ENCODE measurements at regions of chr17 and their contacts with region 1.

Region 1: DNA sequence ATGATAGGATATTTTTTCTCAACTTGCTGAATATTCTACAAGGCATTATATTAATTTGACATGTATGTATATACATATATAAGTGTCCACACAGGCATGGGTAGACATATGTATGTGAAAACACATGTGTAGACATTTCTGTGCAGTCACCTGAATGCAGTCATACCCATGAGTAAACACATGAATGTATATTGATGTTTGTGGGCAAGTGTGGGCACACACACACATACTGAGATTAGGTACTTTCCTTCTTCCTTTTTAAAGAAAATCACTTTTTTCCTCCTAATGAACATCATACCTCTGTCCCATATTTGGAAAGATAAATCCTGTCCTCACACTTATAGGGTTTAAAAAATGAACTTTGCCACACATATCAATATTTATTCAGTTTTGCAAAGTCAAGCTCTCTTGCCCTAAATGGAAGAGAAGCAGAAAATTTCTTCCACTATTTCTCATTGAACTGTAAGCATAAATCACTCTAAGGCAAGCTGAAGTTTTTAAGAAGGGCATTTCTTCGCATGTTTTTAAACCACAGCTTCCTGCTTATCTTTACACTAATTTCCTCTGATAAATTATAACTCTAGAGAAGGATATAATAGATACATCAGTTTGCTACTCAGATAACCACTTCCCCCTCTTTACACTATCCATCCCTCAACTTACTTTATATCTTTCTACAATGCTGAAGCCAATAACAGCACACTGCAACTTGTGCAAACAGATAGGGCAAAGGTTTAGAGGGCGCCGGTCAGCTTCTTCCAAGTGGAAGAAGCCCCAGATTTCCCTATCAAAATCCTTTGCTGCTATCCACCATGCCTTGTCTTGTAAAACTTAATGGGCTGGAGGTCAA is 49.6 kb upstream of the LRRC37A3 start:
- DNase-seq: peak; percentile 49
- ATAC-seq: peak; percentile 46
- H3K4me3 Mint-ChIP-seq: no peak overlapping the region
- H3K27ac Mint-ChIP-seq: peak overlapping the region; percentile 88
- H3K4me1 Mint-ChIP-seq: peaks cover 70% of the 10 kb centered on the region
- H3K27me3 Mint-ChIP-seq: no peaks in the 10 kb centered on the region
- CTCF ChIP-seq: no peak

Region 2: DNA sequence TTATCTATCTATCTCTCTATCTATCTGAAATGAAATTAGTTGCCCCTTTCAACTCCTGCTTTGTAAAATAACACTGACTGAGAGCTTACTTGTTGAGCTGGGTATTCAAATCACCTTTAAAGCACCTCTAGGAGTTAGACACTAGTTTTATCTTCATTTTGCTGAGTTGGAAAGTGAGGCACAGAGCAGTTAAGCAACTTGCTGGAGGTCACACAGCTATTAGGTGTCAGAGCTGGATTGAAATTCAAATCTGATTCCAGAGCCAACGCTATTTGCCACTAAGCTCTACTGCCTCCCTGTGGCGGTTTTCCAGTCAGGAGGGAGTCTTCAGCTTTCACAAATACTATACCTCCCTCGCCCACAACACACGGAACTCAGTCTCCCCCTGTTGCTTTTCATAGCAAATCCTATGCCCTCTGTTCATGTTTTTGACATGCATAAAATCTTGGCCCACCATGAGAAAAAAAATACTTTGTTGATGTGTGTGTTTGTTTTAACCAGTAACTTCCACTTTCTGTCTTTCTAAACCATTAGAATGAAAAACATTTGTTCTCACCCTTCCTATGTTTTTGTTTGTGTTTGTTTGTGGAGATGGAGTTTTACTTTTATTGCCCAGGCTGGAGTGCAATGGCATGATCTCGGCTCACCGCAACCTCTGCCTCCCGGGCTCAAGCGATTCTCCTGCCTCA is 231.9 kb before region 1 on chr17:
- CTCF ChIA-PET with region 1: no interaction called
- POLR2A ChIA-PET with region 1: no interaction called
- intact Hi-C with region 1: no loop called
- DNase-seq: peak; percentile 78
- ATAC-seq: peak; percentile 83
- H3K4me3 Mint-ChIP-seq: no peak overlapping the region
- H3K27ac Mint-ChIP-seq: no peak overlapping the region
- H3K4me1 Mint-ChIP-seq: peaks cover 23% of the 10 kb centered on the region
- H3K27me3 Mint-ChIP-seq: no peaks in the 10 kb centered on the region
- CTCF ChIP-seq: peak; percentile 80

Region 3: GRCh38 chr17:65198653-65199382 is 229.9 kb after region 1 on chr17:
- CTCF ChIA-PET with region 1: no interaction called
- POLR2A ChIA-PET with region 1: no interaction called
- intact Hi-C with region 1: loop called (anchors 10 kb)
- DNase-seq: no peak
- ATAC-seq: no peak
- H3K4me3 Mint-ChIP-seq: no peak overlapping the region
- H3K27ac Mint-ChIP-seq: no peak overlapping the region
- H3K4me1 Mint-ChIP-seq: peaks cover 17% of the 10 kb centered on the region
- H3K27me3 Mint-ChIP-seq: peaks cover 1% of the 10 kb centered on the region
- CTCF ChIP-seq: peak; percentile 92

Measured in activated CD8-positive, alpha-beta T cell treated with anti-CD3 and anti-CD28 coated beads for 36 hours (primary cell).